ENCODE measurements at regions of chr7 and their contacts with region 1.

Region 1: DNA sequence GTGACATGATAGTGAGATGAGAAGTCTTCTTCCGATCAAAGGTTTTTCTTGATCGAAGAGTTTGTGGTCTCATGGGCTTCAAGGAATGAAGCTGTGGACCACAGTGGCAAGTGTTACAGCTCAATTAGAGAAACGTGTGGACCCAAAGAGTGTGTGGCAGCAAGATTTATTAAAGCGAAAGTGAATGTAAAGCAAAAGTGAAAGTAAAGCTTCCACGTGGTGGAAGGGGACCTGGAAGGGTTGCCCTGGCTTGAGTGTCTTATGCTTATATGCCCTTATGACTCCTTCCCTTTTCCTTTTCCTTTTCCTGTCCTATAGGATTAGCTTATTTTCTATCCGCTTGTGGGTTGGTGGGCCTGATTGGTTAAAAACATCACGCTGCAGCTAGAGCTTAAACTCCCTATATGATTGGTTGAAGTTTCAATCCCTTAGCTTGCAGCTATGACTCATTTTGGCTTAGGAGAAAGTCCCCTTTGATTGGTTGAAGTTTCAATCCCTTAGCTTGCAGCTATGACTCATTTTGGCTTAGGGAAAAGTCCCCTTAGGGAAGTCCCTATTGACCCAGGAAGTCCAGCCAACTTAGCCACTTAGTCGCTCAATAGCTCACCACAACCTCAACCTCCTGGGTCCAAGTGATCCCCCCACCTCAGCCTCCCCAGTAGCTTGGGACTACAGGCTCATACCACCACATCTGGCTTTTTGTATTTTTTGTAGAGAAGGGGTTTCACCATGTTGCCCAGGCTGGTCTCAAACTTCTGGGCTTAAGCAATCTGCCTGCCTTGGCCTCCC is 34.7 kb downstream of the MRPS24 start:
- DNase-seq: no peak
- H3K4me3 ChIP-seq: peak overlapping the region in 1 of 2 donors; percentile 3
- H3K27ac ChIP-seq: no peak overlapping the region
- H3K4me1 ChIP-seq: peaks cover 0 to 3% of the 10 kb centered on the region in 2 donors
- H3K27me3 ChIP-seq: no peaks in the 10 kb centered on the region
- CTCF ChIP-seq: no peak

Region 2: GRCh38 chr7:43700059-43700501 is 134.6 kb before region 1 on chr7:
- intact Hi-C with region 1: loop called (anchors 5 kb)
- DNase-seq: no peak
- H3K4me3 ChIP-seq: peak overlapping the region in 1 of 2 donors; percentile 39
- H3K27ac ChIP-seq: no peak overlapping the region
- H3K4me1 ChIP-seq: no peaks in the 10 kb centered on the region
- H3K27me3 ChIP-seq: no peaks in the 10 kb centered on the region
- CTCF ChIP-seq: peak; percentile 56 to 75 (median 60)

Region 3: DNA sequence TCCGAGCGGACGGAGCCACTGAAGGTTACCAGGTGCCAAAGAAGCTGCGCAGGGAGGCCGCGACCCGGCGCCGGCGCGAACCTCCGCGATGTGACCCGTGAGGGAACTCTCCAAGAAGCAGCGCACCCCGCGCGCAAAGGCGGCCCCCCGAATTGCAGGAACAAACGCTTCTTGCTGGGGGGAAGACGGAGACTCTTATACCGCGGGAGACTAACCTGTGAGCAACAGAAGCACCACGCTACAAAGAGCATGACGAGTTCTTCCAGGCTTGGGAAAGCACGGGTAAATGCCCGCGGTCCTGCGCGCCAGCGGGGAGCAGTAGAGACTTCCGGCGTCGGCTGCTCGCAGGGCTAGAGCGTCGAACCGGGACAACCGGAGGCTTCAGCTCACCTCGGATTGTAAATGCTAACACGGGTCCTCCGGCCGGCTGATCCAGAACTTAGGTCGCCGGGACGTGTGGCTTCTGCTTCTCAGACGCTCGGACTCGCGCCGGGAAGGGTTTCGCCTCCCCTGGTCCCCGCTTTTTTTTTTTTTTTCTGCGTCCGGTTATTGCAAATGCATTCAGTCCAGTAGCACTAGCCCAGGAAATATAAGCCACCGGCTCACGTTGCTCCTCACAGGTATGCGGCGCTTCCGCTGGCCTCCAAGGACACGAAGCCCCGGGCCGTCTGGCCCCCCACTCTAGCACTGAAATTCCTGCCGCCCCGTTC is 105.3 kb before region 1 on chr7 and contains the start of gene COA1:
- intact Hi-C with region 1: loop called (anchors 5 kb)
- DNase-seq: peak; percentile 46 to 92
- H3K4me3 ChIP-seq: peak within 1 kb of the TSS; percentile 73 to 82
- H3K27ac ChIP-seq: peak within 1 kb of the TSS; percentile 69 to 88
- H3K4me1 ChIP-seq: peaks cover 9 to 10% of the 10 kb centered on the region in 2 donors
- H3K27me3 ChIP-seq: no peaks in the 10 kb centered on the region
- CTCF ChIP-seq: peak in 2 of 3 experiments; percentile 13 to 17
- total RNA-seq, gene COA1: 16.3 TPM

Region 4: DNA sequence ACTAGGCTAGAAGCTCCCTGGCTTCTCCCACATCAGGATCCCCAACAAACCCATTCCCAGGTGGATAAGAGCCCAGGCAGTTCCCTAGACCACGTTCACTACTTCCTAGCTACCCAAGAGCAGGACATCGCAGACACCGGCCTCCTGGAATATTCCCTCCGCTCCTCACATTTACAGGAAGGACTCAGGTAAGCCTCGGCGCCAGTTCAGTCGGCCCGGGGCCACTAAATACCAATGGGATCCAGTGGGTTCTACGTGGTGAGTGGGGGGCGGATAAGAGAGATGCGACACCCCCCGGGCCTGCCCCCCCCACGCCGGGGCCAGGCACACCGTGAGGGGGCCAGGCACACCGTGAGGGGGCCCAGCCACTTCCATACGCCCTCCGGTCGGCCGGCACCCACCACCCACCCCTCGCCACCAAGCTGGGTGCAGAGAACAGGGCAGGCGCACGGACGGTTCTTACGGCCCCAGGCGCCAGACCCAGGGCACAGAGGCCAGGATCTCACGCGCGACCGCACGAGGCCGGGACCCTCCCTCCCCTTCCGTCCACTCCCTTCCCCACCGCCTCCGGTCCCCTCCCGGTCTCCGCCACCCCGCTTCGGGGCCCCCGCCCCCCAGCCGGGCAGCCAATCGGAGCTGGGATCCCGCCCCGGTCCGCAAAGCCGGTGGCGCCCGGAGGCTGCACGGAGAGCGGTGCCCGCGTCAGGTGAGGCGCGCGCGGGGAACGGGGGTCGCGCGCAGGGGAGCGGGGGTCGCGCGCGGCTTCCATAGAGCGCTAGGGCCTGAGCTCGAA is 76.4 kb before region 1 on chr7 and contains the start of gene BLVRA:
- intact Hi-C with region 1: loop called (anchors 5 kb)
- DNase-seq: peak; percentile 27 to 79
- H3K4me3 ChIP-seq: peak within 1 kb of the TSS; percentile 95 to 96
- H3K27ac ChIP-seq: peak within 1 kb of the TSS; percentile 63 to 87
- H3K4me1 ChIP-seq: peaks cover 0 to 13% of the 10 kb centered on the region in 2 donors
- H3K27me3 ChIP-seq: no peaks in the 10 kb centered on the region
- CTCF ChIP-seq: no peak
- total RNA-seq, gene BLVRA: 36.1 TPM

Region 5: GRCh38 chr7:43856996-43857395 is 22.3 kb after region 1 on chr7:
- intact Hi-C with region 1: no loop called
- DNase-seq: no peak
- H3K4me3 ChIP-seq: no peak overlapping the region
- H3K27ac ChIP-seq: no peak overlapping the region
- H3K4me1 ChIP-seq: no peaks in the 10 kb centered on the region
- H3K27me3 ChIP-seq: no peaks in the 10 kb centered on the region
- CTCF ChIP-seq: no peak